ENCODE measurements at regions of chr14 and their contacts with region 1.

Region 1: DNA sequence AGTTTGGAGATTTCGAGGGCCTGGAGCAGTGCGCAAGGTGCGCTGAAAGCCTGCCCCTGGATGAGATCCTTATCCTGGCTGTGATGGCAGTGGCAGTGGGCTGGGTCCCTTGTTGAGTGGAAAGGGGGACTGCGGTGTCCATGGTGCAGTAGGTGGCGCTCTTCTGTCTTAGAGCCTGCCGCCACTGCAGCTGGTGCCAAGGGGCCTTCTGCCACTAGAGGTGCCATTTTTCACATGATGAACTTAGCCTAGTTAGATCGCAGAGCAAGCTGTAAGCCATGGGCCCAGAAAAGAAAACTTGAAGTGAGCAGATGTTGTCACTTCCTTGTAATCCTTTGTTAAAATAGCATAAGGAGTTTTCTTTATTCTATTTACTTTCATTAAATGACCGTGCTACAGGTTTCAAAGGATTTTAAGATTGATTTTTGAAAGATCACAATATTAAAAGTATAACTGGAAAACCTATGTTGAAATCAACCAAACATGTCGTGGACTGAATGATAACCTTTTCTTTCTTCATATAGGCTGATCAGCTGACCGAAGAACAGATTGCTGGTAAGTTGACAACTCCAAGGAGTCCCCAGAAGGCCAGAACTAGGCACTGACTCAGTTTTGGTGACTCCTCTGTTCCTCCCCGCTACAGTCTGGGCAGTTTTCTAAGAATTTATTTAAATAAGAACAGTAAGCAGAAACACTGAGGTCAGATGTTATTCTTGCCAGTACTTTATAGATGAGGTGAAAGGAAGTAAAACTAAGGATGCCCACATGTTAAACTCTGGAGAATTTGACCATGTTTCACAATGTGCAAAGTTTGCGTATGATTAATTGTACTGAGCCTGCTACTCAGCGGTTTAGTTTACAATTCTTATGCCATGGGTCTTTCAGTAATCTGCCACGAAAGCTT is 3.0 kb downstream of the CALM1 start:
- DNase-seq: peak; percentile 63
- ATAC-seq: peak; percentile 46
- H3K4me3 Mint-ChIP-seq: peak overlapping the region; percentile 91
- H3K27ac Mint-ChIP-seq: peak overlapping the region; percentile 98
- H3K4me1 Mint-ChIP-seq: peaks cover 47% of the 10 kb centered on the region
- H3K27me3 Mint-ChIP-seq: no peaks in the 10 kb centered on the region
- CTCF ChIP-seq: peak; percentile 78

Region 2: GRCh38 chr14:88562831-88563686 is 1836.7 kb before region 1 on chr14 and contains the start of gene ZC3H14:
- CTCF ChIA-PET with region 1: no interaction called
- POLR2A ChIA-PET with region 1: no interaction called
- intact Hi-C with region 1: loop called (anchors 5 kb)
- DNase-seq: peak; percentile 87
- ATAC-seq: peak; percentile 97
- H3K4me3 Mint-ChIP-seq: peak within 1 kb of the TSS; percentile 96
- H3K27ac Mint-ChIP-seq: peak within 1 kb of the TSS; percentile 86
- H3K4me1 Mint-ChIP-seq: peaks cover 18% of the 10 kb centered on the region
- H3K27me3 Mint-ChIP-seq: peaks cover 6% of the 10 kb centered on the region
- CTCF ChIP-seq: no peak
- total RNA-seq, gene ZC3H14: 38.7 and 45.0 TPM in 2 replicates

Region 3: DNA sequence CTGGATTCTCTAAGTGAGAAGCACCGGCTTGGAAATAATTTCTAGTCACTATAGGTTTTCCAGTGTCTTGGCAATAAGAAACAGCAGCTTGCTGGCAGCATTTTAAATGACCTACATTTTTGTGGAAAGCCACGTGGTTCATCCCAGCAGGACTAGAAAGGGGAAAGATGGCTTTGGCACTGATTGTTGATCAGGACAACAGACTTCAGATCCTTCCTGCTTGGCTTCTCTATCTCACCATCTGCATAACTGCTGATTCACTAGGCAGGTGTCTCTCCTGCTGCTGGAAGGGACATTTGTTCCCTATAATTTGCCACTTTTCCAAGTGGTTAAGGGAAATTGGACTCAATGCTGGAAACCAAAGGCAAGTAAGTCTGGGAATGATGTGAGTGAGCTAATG is 1444.3 kb before region 1 on chr14:
- CTCF ChIA-PET with region 1: no interaction called
- POLR2A ChIA-PET with region 1: no interaction called
- intact Hi-C with region 1: no loop called
- DNase-seq: no peak
- ATAC-seq: no peak
- H3K4me3 Mint-ChIP-seq: no peak overlapping the region
- H3K27ac Mint-ChIP-seq: no peak overlapping the region
- H3K4me1 Mint-ChIP-seq: no peaks in the 10 kb centered on the region
- H3K27me3 Mint-ChIP-seq: peaks cover 7% of the 10 kb centered on the region
- CTCF ChIP-seq: no peak

Region 4: GRCh38 chr14:89973234-89973823 is 426.5 kb before region 1 on chr14:
- CTCF ChIA-PET with region 1: interaction called, 3 read pairs
- POLR2A ChIA-PET with region 1: no interaction called
- intact Hi-C with region 1: loop called (anchors 5 kb)
- DNase-seq: no peak
- ATAC-seq: peak; percentile 60
- H3K4me3 Mint-ChIP-seq: no peak overlapping the region
- H3K27ac Mint-ChIP-seq: no peak overlapping the region
- H3K4me1 Mint-ChIP-seq: no peaks in the 10 kb centered on the region
- H3K27me3 Mint-ChIP-seq: no peaks in the 10 kb centered on the region
- CTCF ChIP-seq: peak; percentile 83

Region 5: DNA sequence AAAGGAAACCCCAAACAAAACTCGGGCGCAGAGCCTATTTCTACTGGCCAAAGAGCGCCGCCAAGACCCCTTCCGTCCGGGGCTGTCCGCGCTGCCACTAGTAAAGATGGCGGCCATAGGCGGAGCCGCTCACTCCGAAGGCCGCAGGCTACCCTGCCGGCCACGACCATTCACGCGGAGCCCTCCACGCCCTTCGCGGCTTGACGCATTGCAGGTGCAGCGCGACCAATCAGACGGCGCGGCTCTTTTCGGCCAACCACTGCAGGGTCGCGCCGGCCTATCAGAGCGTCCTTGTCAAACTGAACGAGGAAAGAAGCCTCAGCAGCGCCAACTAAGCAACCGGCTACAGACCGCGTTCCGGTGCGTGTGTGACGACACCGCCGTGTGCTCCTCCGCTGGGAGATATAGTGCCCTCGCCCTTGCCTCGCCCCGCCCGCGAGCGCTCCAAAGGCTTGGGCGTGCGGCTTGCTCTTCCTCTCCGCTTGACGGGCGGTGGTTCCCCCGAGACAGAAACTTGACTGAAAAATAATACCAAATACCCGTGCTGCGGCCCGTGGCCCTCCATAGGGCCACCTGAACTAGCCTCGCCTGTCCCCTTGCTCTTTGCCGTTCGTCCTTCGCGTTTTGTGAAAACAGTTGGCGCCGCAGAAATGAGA is 16.6 kb before region 1 on chr14:
- CTCF ChIA-PET with region 1: interaction called, 14 read pairs
- POLR2A ChIA-PET with region 1: interaction called, 492 read pairs
- intact Hi-C with region 1: loop called (anchors 1 kb)
- DNase-seq: peak; percentile 94
- ATAC-seq: peak; percentile 87
- H3K4me3 Mint-ChIP-seq: no peak overlapping the region
- H3K27ac Mint-ChIP-seq: no peak overlapping the region
- H3K4me1 Mint-ChIP-seq: no peaks in the 10 kb centered on the region
- H3K27me3 Mint-ChIP-seq: no peaks in the 10 kb centered on the region
- CTCF ChIP-seq: no peak

Region 6: GRCh38 chr14:90758028-90758889 is 358.5 kb after region 1 on chr14:
- CTCF ChIA-PET with region 1: interaction called, 16 read pairs
- POLR2A ChIA-PET with region 1: interaction called, 29 read pairs
- intact Hi-C with region 1: loop called (anchors 1 kb)
- DNase-seq: peak; percentile 95
- ATAC-seq: peak; percentile 88
- H3K4me3 Mint-ChIP-seq: peak overlapping the region; percentile 79
- H3K27ac Mint-ChIP-seq: peak overlapping the region; percentile 86
- H3K4me1 Mint-ChIP-seq: peaks cover 24% of the 10 kb centered on the region
- H3K27me3 Mint-ChIP-seq: peaks cover 2% of the 10 kb centered on the region
- CTCF ChIP-seq: no peak

Region 7: GRCh38 chr14:91317381-91318308 is 917.9 kb after region 1 on chr14:
- CTCF ChIA-PET with region 1: no interaction called
- POLR2A ChIA-PET with region 1: no interaction called
- intact Hi-C with region 1: loop called (anchors 5 kb)
- DNase-seq: peak; percentile 62
- ATAC-seq: peak; percentile 32
- H3K4me3 Mint-ChIP-seq: peak overlapping the region; percentile 70
- H3K27ac Mint-ChIP-seq: peak overlapping the region; percentile 98
- H3K4me1 Mint-ChIP-seq: peaks cover 78% of the 10 kb centered on the region
- H3K27me3 Mint-ChIP-seq: no peaks in the 10 kb centered on the region
- CTCF ChIP-seq: no peak